ENCODE measurements at regions of chr11 and their contacts with region 1.

Region 1: DNA sequence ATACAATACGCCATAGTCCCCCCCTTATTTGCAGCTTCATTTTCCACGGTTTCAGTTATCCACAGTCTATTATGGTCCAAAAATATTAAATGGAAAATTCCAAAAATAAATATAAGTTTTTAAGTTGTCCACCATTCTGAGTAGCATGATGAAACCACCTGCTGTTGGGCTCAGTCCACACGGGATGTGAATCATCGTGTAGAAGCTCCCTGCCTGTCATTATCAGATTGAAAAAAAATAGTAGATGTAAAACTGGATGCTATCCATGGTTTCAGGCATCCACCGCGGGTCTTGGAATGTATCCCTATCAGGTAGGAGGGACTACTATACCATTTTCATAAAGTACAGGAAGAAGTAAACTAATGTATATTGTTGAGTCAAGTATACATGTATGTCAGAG is 127.4 kb downstream of the TTC17 start:
- DNase-seq: peak in 1 of 4 experiments; percentile 7
- ATAC-seq: no peak
- H3K4me3 ChIP-seq: no peak overlapping the region
- H3K27ac ChIP-seq: no peak overlapping the region
- H3K4me1 ChIP-seq: no peaks in the 10 kb centered on the region
- H3K27me3 ChIP-seq: no peaks in the 10 kb centered on the region
- CTCF ChIP-seq: no peak
- EP300 ChIP-seq: no peak
- POLR2A ChIP-seq: no peak
- RAD21 ChIP-seq: no peak

Region 2: GRCh38 chr11:43419460-43419859 is 66.7 kb before region 1 on chr11:
- CTCF ChIA-PET with region 1: no interaction called
- POLR2A ChIA-PET with region 1: no interaction called
- in situ Hi-C with region 1: no loop called
- intact Hi-C with region 1: no loop called
- DNase-seq: peak; percentile 15 to 53 (median 20)
- ATAC-seq: peak; percentile 85
- H3K4me3 ChIP-seq: no peak overlapping the region
- H3K27ac ChIP-seq: no peak overlapping the region
- H3K4me1 ChIP-seq: no peaks in the 10 kb centered on the region
- H3K27me3 ChIP-seq: no peaks in the 10 kb centered on the region
- CTCF ChIP-seq: peak; percentile 26 to 70 (median 53); a peak in 5 of 6 replicates
- EP300 ChIP-seq: no peak
- POLR2A ChIP-seq: no peak
- RAD21 ChIP-seq: peak; percentile 71 to 75

Region 3: DNA sequence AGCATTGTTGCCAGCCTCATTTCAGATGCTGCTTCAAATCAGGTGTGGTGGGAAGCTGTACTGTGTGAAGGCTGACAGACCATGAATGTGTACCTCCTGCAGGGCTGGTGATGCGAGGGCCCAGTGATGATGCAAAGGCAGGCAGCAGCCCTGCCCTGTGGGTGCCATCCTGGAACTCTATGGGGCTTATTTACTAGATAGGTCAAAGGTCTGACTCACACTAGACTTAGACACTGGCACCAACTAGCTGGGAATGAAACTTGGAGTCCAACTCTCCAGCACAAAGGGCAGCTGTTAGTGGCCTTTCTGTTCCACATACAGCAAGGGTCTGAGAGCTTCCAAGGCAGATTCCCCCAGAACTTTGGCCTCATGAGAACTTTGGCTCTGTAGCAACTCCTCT is 11.0 kb after region 1 on chr11:
- CTCF ChIA-PET with region 1: no interaction called
- POLR2A ChIA-PET with region 1: interaction called, 11 read pairs
- in situ Hi-C with region 1: no loop called
- intact Hi-C with region 1: no loop called
- DNase-seq: no peak
- ATAC-seq: no peak
- H3K4me3 ChIP-seq: no peak overlapping the region
- H3K27ac ChIP-seq: no peak overlapping the region
- H3K4me1 ChIP-seq: no peaks in the 10 kb centered on the region
- H3K27me3 ChIP-seq: no peaks in the 10 kb centered on the region; a peak in 1 of 5 replicates
- CTCF ChIP-seq: no peak
- EP300 ChIP-seq: no peak
- POLR2A ChIP-seq: no peak
- RAD21 ChIP-seq: no peak

Measured in K562 (cell line).